PC-9 (cell line): ENCODE measurements at regions of chr2 and their contacts with region 1.

Region 1: DNA sequence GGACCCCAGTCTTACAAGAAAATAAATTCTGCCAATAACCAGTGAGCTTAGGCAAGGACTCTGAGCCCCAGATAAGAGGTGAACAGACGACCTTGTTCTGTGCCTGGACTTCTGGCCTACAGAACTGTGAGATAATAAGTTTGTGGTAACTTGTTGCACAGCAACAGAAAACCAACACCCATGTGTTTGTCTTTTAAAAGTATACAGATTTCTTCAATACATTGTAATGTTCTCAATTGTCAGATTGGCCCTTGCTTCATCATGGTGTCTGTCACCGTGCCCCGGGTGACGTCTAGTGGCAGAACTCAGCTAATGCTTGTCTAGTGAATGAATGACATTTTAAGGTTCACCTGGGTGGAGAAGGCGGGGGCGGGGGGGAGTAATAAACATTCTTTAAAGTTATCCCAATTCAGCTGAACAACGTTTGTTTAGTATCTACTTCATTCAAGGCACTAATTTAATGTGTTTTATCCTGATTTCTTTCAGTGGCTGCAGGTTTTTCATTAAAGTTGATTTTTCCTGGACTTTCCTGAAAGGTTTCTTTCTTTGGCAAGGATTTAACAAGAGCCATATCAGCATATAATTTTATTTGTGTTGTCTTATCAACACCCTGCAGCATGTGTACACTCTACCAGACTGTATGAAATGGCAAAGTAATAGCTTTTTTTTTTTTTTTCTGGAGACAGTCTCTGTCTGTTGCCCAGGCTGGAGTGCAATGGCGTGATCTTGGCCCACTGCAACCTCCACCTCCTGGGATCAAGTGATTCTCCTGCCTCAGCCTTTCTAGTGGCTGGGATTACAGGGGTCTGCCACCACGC is 123.8 kb upstream of the DLX2 start:
- DNase-seq: peak; percentile 81 to 88
- H3K4me3 ChIP-seq: no peak overlapping the region
- H3K27ac ChIP-seq: no peak overlapping the region
- H3K4me1 ChIP-seq: peaks cover 60% of the 10 kb centered on the region
- H3K27me3 ChIP-seq: no peaks in the 10 kb centered on the region
- CTCF ChIP-seq: peak; percentile 82

Region 2: GRCh38 chr2:170862286-170862902 is 1364.1 kb before region 1 on chr2:
- CTCF ChIA-PET with region 1: no interaction called
- POLR2A ChIA-PET with region 1: no interaction called
- intact Hi-C with region 1: no loop called
- DNase-seq: no peak
- H3K4me3 ChIP-seq: no peak overlapping the region
- H3K27ac ChIP-seq: no peak overlapping the region
- H3K4me1 ChIP-seq: no peaks in the 10 kb centered on the region
- H3K27me3 ChIP-seq: no peaks in the 10 kb centered on the region
- CTCF ChIP-seq: no peak

Region 3: GRCh38 chr2:171069286-171069956 is 1157.0 kb before region 1 on chr2:
- CTCF ChIA-PET with region 1: interaction called, 10 read pairs
- POLR2A ChIA-PET with region 1: no interaction called
- intact Hi-C with region 1: no loop called
- DNase-seq: no peak
- H3K4me3 ChIP-seq: no peak overlapping the region
- H3K27ac ChIP-seq: no peak overlapping the region
- H3K4me1 ChIP-seq: no peaks in the 10 kb centered on the region
- H3K27me3 ChIP-seq: no peaks in the 10 kb centered on the region
- CTCF ChIP-seq: no peak

Region 4: GRCh38 chr2:171564469-171564868 is 662.0 kb before region 1 on chr2:
- CTCF ChIA-PET with region 1: no interaction called
- POLR2A ChIA-PET with region 1: interaction called, 11 read pairs
- intact Hi-C with region 1: no loop called
- DNase-seq: peak in 1 of 2 experiments; percentile 79
- H3K4me3 ChIP-seq: no peak overlapping the region
- H3K27ac ChIP-seq: no peak overlapping the region
- H3K4me1 ChIP-seq: peaks cover 10% of the 10 kb centered on the region
- H3K27me3 ChIP-seq: no peaks in the 10 kb centered on the region
- CTCF ChIP-seq: no peak

Region 5: DNA sequence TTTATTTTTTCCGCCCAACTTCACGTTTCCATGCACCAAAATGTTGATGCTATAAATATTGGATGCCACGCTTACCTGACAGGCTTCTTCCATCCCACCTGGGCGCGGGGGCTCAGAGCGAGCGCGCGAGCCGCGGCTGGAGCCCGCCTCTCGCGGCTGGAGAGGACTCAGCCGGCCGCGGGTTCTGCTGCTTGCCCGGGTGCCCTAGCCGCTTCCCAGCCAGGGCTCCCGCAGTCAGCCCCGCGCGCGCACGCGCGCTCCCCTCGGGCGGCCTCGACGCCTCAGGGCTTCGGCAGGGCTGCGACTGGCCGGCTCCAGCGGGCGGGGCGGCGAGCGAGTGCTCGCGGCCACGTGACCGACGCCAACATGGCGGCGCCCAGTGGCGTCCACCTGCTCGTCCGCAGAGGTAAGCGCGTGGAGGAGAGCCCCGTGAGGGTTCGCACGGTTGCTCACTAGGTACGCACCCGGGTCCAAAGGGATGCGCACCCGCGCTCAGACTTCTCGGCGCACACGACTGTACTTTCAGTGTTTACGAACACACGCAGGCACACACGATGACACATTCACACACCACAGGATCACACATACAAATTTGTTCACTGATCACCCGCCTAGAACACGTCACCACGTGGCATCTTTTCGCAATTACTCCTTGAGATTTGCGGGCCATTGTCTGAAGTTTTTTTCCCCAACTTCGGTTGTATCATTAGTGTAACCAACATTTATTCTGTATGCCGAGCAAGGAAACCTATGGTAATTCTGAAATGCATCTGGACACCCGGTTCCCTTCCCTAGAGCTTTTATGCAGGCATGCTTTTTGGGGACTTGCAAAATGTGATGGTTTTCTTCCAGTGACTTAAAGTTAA is 226.6 kb before region 1 on chr2 and contains the start of gene METAP1D:
- CTCF ChIA-PET with region 1: no interaction called
- POLR2A ChIA-PET with region 1: no interaction called
- intact Hi-C with region 1: loop called (anchors 10 kb)
- DNase-seq: peak; percentile 91 to 100
- H3K4me3 ChIP-seq: peak within 1 kb of the TSS; percentile 65
- H3K27ac ChIP-seq: peak within 1 kb of the TSS; percentile 77
- H3K4me1 ChIP-seq: peaks cover 17% of the 10 kb centered on the region
- H3K27me3 ChIP-seq: no peaks in the 10 kb centered on the region
- CTCF ChIP-seq: no peak; the same call in 1 of the 2 replicates
- total RNA-seq, gene METAP1D: 21.5 and 32.4 TPM in 2 replicates

Region 6: GRCh38 chr2:172200495-172201085 is 25.9 kb before region 1 on chr2:
- CTCF ChIA-PET with region 1: interaction called, 6 read pairs
- POLR2A ChIA-PET with region 1: no interaction called
- intact Hi-C with region 1: loop called (anchors 1 kb)
- DNase-seq: no peak
- H3K4me3 ChIP-seq: no peak overlapping the region
- H3K27ac ChIP-seq: no peak overlapping the region
- H3K4me1 ChIP-seq: peaks cover 8% of the 10 kb centered on the region
- H3K27me3 ChIP-seq: no peaks in the 10 kb centered on the region
- CTCF ChIP-seq: peak; percentile 84

Region 7: DNA sequence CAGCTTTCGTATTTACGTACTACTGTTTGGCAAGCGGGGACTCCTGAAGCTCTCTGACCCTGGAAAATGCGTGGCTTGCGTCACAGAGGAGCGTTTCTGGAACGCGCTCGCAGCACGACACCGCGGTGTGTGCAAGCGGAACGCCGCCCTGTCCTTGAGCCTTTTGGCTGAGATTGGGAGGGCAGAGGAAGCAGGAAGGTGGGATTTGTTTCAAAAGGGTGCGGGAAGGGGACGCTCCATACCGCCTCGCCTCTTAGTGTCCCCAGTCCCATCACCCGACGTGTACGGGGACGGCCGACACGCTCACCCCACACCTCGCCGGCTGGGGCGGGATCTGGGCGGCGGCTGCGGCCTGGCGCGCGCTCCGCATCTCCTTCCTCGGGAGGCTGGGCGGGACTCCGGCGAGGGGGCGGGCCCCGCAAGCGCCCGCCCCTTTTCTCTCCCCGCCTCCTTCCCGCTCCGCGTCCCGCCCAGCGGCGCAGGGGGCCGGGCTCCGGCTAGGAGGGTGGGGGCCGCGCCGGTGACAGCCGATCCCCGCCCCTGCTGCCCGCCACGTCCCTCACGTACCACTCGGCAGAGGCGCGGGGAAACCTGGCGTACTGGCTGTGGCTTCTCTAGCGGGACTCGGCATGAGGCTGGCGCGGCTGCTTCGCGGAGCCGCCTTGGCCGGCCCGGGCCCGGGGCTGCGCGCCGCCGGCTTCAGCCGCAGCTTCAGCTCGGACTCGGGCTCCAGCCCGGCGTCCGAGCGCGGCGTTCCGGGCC is 329.2 kb after region 1 on chr2 and contains the start of gene PDK1:
- CTCF ChIA-PET with region 1: no interaction called
- POLR2A ChIA-PET with region 1: no interaction called
- intact Hi-C with region 1: loop called (anchors 5 kb)
- DNase-seq: peak; percentile 87 to 99
- H3K4me3 ChIP-seq: peak within 1 kb of the TSS; percentile 75
- H3K27ac ChIP-seq: peak within 1 kb of the TSS; percentile 65
- H3K4me1 ChIP-seq: peaks cover 58% of the 10 kb centered on the region
- H3K27me3 ChIP-seq: no peaks in the 10 kb centered on the region
- CTCF ChIP-seq: no peak
- total RNA-seq, gene PDK1: 15.9 and 18.5 TPM in 2 replicates